ENCODE measurements at regions of chr6 and their contacts with region 1.

Region 1: DNA sequence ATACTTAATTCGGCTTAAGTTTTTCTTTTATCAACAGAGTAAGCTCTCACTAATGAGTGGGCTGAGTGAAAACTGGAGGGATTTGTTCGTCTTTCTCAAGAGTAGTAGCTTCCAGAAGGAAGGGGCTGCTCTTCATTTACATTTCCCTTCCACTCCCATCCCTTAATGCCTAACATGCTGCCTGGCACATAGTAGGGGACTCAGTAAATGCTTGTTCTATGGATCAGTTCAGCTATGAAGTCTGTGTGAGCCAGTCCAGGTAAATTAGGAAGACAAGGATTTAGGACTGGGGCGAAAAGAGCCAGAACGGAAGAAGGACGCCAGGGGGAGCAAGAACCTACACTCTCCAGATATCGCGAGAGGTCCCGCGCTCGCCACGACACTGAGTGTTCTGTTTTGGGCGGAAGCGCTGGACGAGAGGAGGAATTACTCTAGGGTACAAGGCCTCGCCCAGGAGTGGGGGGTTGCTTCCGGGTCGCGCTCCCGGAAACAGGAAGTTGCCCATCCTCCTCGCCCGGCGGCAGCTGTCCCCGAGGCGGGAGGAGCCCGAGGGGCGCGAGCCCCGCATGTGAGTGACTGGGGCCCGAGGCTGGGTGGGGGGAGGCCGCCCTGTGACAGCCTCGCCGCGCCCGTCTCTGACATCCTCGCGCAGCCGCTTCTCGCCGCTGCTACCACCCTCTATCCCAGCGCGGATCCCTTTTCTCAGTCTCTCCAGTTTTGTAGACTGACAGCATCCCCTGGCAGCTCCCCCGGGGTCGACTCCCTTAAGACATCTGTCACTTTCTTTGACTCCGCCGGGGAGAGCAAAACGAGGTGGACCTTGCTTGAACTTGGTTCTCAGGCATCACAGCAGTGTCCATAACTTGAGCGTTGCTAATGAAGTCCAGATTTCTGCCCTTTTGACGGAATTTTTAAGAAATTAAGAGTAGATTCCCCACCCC is at the start of gene C6orf89:
- DNase-seq: peak; percentile 97 to 99
- ATAC-seq: peak; percentile 100
- H3K4me3 ChIP-seq: peak within 1 kb of the TSS; percentile 87
- H3K27ac ChIP-seq: peak within 1 kb of the TSS; percentile 95
- H3K4me1 ChIP-seq: peaks cover 20% of the 10 kb centered on the region
- H3K27me3 ChIP-seq: no peaks in the 10 kb centered on the region
- CTCF ChIP-seq: peak; percentile 73
- total RNA-seq, gene C6orf89: 37.1 to 53.4 (median 51.1) TPM

Region 2: GRCh38 chr6:36432151-36432633 is 453.5 kb before region 1 on chr6:
- intact Hi-C with region 1: no loop called
- DNase-seq: no peak
- ATAC-seq: no peak
- H3K4me3 ChIP-seq: no peak overlapping the region
- H3K27ac ChIP-seq: no peak overlapping the region
- H3K4me1 ChIP-seq: no peaks in the 10 kb centered on the region
- H3K27me3 ChIP-seq: no peaks in the 10 kb centered on the region
- CTCF ChIP-seq: no peak

Region 3: DNA sequence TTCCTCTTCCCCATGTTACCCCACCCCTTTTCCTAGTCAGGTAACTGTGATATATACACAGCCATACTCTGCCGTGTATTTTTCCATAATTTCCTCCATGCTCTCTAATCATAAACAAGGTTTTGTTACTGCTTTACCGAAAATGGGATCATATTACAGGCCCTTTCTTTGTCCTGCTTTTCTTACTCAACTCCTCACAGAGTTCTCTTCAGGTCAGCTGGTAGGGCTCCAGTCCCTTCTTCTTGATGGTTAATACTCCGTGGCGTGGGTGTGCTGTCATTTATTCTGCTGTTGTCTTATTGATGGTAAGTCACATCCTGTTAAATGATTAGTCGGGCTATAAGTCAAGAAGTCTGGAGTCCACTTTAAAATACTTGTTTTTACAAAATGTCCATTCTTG is 43.9 kb after region 1 on chr6:
- intact Hi-C with region 1: loop called in 1 of 2 experiments (anchors 5 kb)
- DNase-seq: no peak
- ATAC-seq: peak in 3 of 4 donors; percentile 28 to 50 (median 46)
- H3K4me3 ChIP-seq: no peak overlapping the region
- H3K27ac ChIP-seq: peak overlapping the region; percentile 84
- H3K4me1 ChIP-seq: peaks cover 36% of the 10 kb centered on the region
- H3K27me3 ChIP-seq: no peaks in the 10 kb centered on the region
- CTCF ChIP-seq: no peak

Region 4: GRCh38 chr6:36979347-36979742 is 93.6 kb after region 1 on chr6:
- intact Hi-C with region 1: loop called (anchors 2 to 5 kb)
- DNase-seq: peak in 1 of 2 donors; percentile 78
- ATAC-seq: peak; percentile 62 to 86 (median 70)
- H3K4me3 ChIP-seq: no peak overlapping the region
- H3K27ac ChIP-seq: peak overlapping the region; percentile 32
- H3K4me1 ChIP-seq: peaks cover 42% of the 10 kb centered on the region
- H3K27me3 ChIP-seq: no peaks in the 10 kb centered on the region
- CTCF ChIP-seq: peak; percentile 51

Region 5: GRCh38 chr6:37018198-37019064 is 132.7 kb after region 1 on chr6:
- intact Hi-C with region 1: loop called (anchors 2 kb)
- DNase-seq: peak; percentile 90 to 95
- ATAC-seq: peak; percentile 96 to 99 (median 98)
- H3K4me3 ChIP-seq: no peak overlapping the region
- H3K27ac ChIP-seq: no peak overlapping the region
- H3K4me1 ChIP-seq: peaks cover 3% of the 10 kb centered on the region
- H3K27me3 ChIP-seq: no peaks in the 10 kb centered on the region
- CTCF ChIP-seq: peak; percentile 74

Region 6: DNA sequence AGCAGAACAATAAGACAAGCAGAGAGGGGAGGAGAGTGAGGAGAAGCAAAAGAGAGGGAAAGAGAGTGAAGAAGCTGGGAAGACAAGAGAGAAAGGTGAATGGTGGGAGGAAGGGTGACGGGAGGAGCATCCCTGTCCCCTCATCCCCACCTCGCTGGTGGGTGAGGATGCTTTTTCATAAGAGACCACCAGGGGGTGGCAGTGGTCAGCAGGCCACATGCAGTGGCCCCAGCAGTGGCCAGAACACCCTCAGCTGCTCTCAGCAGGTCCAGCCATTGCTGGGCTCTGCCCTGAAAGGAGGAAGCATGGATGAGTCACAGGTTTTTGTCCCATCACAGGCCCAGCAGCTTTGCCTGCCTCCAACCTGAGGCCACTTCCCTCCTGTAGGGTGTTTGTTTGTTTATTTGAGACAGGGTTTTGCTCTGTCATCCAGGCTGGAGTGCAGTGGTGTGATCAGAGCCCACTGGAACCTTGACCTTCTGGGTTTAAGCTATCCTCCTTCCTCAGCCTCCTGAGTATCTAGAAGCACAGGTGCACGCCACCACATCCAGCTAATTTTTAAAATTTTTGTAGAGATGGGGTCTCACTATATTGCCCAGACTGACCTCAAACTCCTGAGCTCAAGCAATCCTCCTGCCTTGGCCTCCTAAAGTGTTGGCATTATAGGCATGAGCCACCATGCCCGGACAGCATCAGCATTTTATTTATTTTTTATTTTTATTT is 143.7 kb after region 1 on chr6:
- intact Hi-C with region 1: no loop called
- DNase-seq: peak; percentile 74 to 85
- ATAC-seq: peak; percentile 87 to 91 (median 88)
- H3K4me3 ChIP-seq: no peak overlapping the region
- H3K27ac ChIP-seq: no peak overlapping the region
- H3K4me1 ChIP-seq: no peaks in the 10 kb centered on the region
- H3K27me3 ChIP-seq: no peaks in the 10 kb centered on the region
- CTCF ChIP-seq: peak; percentile 73

Region 7: DNA sequence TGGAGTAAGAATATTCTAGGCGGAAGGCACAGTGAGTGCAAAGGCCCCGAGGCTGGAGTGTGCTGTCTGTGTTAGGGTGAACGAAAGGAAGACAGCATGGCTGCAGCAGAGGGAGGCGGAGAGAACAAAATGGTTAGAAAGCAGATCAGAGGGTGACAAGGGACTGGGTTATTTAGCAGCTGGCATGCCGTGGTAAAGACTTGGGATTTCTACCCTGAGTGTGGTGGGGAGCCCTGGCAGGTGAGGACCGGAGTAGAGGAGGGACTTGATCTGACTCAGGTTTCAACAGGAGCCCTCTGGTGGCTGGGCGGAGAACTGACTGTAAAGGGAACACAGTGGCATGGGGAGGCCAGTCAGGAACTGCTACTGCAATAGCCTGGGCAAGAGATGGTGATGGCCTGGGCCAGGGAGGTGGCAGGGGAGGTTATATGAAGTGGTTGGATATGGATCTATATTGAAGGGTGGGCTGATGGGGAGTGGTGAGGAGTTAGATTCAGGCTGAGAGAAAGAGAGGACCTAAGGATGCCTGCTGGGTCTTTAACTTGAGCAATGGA is 322.2 kb after region 1 on chr6:
- intact Hi-C with region 1: loop called (anchors 10 kb)
- DNase-seq: peak; percentile 83 to 85
- ATAC-seq: peak; percentile 64 to 76 (median 74)
- H3K4me3 ChIP-seq: no peak overlapping the region
- H3K27ac ChIP-seq: no peak overlapping the region
- H3K4me1 ChIP-seq: no peaks in the 10 kb centered on the region
- H3K27me3 ChIP-seq: no peaks in the 10 kb centered on the region
- CTCF ChIP-seq: peak; percentile 66